CD4-positive, alpha-beta memory T cell (primary cell): ENCODE measurements at regions of chr10 and their contacts with region 1.

Region 1: DNA sequence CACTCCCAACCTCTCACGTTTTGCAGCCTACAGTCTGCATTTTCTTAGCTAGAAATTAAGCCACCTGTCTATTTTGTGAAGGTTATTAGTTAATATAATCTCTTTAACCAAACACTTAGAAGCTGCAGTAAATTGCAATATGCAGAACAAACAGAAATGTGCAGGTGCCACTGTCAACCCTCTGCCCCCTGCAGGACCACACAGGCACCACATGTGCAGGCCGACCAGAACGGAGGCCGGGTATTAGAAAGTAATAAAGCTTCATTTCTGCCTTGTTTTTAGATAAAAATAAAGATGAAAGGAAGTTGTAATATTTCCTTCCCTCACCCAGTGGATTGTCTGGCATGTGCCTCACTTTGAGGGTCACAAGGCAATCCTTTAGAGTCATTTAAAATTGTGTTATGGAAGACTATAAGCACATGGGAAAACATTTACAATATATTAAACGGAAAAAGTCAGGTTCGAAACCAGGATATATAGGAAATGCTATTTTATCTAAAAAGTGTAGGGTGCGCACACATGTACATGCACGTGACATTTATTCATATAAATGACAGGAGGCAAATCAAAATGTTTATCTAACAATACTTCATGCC is 158.2 kb downstream of the ARHGAP12 start:
- DNase-seq: peak; percentile 50 to 54 (median 51)
- H3K4me3 ChIP-seq: no peak overlapping the region
- H3K4me3 Mint-ChIP-seq: no peak overlapping the region
- H3K27ac ChIP-seq: no peak overlapping the region
- H3K27ac Mint-ChIP-seq: no peak overlapping the region
- H3K4me1 ChIP-seq: no peaks in the 10 kb centered on the region
- H3K4me1 Mint-ChIP-seq: no peaks in the 10 kb centered on the region
- H3K27me3 ChIP-seq: no peaks in the 10 kb centered on the region
- H3K27me3 Mint-ChIP-seq: no peaks in the 10 kb centered on the region

Region 2: GRCh38 chr10:30751678-30752331 is 1018.6 kb before region 1 on chr10:
- CTCF ChIA-PET with region 1: interaction called, 9 read pairs
- POLR2A ChIA-PET with region 1: no interaction called
- intact Hi-C with region 1: loop called (anchors 1 kb)
- DNase-seq: peak; percentile 49 to 72 (median 61)
- H3K4me3 ChIP-seq: no peak overlapping the region
- H3K4me3 Mint-ChIP-seq: peak overlapping the region in 6 of 8 donors; percentile 7 to 69 (median 22)
- H3K27ac ChIP-seq: no peak overlapping the region
- H3K27ac Mint-ChIP-seq: peak overlapping the region in 3 of 7 donors; percentile 62 to 82 (median 64)
- H3K4me1 ChIP-seq: peaks cover 4% of the 10 kb centered on the region
- H3K4me1 Mint-ChIP-seq: peaks cover 6 to 30% (median 22%) of the 10 kb centered on the region in 4 donors
- H3K27me3 ChIP-seq: no peaks in the 10 kb centered on the region
- H3K27me3 Mint-ChIP-seq: peaks cover 0 to 3% of the 10 kb centered on the region in 2 donors

Region 3: DNA sequence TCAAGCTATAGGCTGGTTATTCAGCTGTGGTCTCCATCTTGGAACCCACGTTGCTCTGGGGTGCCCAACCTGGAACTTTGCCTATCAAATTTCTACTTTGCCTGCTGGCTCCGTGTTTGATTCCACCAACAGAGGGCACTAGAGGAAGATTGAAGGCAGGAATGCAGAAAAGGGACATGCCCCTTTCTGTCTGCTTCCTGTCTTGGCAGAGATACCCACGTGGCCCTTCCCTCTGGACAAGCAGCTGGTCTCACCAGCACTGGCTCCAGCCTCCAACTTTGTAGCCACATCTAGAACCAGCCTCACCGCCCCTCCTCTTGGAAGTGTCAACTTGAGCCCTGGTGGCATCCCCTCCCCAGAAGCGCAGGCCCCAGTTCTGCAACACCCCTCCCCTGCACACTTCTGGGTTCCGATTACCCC is 686.6 kb before region 1 on chr10:
- CTCF ChIA-PET with region 1: interaction called, 12 read pairs
- POLR2A ChIA-PET with region 1: no interaction called
- intact Hi-C with region 1: no loop called
- DNase-seq: peak; percentile 40 to 59 (median 50)
- H3K4me3 ChIP-seq: no peak overlapping the region
- H3K4me3 Mint-ChIP-seq: no peak overlapping the region
- H3K27ac ChIP-seq: no peak overlapping the region
- H3K27ac Mint-ChIP-seq: no peak overlapping the region
- H3K4me1 ChIP-seq: no peaks in the 10 kb centered on the region
- H3K4me1 Mint-ChIP-seq: peaks cover 0 to 1% (median under 1%) of the 10 kb centered on the region in 4 donors
- H3K27me3 ChIP-seq: no peaks in the 10 kb centered on the region
- H3K27me3 Mint-ChIP-seq: no peaks in the 10 kb centered on the region

Region 4: DNA sequence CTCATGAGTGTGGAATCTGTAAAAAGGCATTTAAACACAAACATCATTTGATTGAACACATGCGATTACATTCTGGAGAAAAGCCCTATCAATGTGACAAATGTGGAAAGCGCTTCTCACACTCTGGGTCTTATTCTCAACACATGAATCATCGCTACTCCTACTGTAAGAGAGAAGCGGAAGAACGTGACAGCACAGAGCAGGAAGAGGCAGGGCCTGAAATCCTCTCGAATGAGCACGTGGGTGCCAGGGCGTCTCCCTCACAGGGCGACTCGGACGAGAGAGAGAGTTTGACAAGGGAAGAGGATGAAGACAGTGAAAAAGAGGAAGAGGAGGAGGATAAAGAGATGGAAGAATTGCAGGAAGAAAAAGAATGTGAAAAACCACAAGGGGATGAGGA is 243.7 kb before region 1 on chr10:
- CTCF ChIA-PET with region 1: no interaction called
- POLR2A ChIA-PET with region 1: no interaction called
- intact Hi-C with region 1: loop called (anchors 10 kb)
- DNase-seq: no peak
- H3K4me3 ChIP-seq: no peak overlapping the region
- H3K4me3 Mint-ChIP-seq: no peak overlapping the region
- H3K27ac ChIP-seq: no peak overlapping the region
- H3K27ac Mint-ChIP-seq: peak overlapping the region in 3 of 7 donors; percentile 13 to 67 (median 33)
- H3K4me1 ChIP-seq: no peaks in the 10 kb centered on the region
- H3K4me1 Mint-ChIP-seq: peaks cover 0 to 4% (median 0%) of the 10 kb centered on the region in 4 donors
- H3K27me3 ChIP-seq: no peaks in the 10 kb centered on the region
- H3K27me3 Mint-ChIP-seq: no peaks in the 10 kb centered on the region

Region 5: DNA sequence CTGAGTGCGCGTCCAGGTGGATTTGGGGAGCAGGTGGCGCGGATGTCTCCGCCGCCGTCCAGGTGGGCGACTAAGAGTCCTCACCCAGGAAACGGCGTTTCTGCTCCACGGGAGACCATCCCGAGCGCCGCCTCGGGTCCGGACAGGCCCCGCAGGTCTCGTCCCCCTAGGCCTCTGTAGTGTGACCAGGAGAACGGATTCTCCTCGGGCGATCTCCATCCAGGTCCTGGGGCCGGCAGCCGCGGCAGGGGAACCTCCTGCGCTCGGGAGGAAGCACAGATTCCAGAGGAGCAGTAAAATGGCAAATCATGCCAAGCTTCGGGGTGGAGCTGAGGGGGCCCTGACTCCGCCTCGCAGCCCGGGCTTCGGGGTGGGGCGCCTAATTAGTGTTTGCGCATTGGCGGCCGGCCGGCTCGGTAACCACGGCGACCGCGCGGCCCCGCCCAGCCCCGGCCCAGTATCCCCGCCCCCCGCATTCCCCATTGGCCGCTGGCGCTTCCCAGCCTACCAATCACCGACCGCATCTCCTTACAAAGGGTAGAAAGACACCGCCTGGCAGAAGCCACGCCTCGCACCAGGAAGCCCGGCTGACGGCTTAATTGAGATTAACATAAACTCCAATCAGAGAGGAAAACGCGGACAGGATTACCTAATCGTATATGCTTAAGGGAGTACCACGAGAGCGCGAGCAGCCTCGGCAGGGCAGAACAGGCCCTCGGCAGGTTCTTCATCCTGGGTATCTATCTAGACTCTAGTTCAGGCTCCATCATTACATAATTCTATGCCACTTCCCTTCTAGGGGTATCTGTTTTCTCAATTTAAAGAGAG is 10.4 kb before region 1 on chr10:
- CTCF ChIA-PET with region 1: interaction called, 18 read pairs
- POLR2A ChIA-PET with region 1: interaction called, 3 read pairs
- intact Hi-C with region 1: no loop called
- DNase-seq: peak; percentile 92 to 99 (median 97)
- H3K4me3 ChIP-seq: peak overlapping the region; percentile 66 to 90
- H3K4me3 Mint-ChIP-seq: peak overlapping the region; percentile 75 to 92 (median 86)
- H3K27ac ChIP-seq: peak overlapping the region; percentile 78
- H3K27ac Mint-ChIP-seq: peak overlapping the region; percentile 94 to 99 (median 99)
- H3K4me1 ChIP-seq: peaks cover 10% of the 10 kb centered on the region
- H3K4me1 Mint-ChIP-seq: peaks cover 9 to 17% (median 13%) of the 10 kb centered on the region in 4 donors
- H3K27me3 ChIP-seq: no peaks in the 10 kb centered on the region
- H3K27me3 Mint-ChIP-seq: no peaks in the 10 kb centered on the region

Region 6: DNA sequence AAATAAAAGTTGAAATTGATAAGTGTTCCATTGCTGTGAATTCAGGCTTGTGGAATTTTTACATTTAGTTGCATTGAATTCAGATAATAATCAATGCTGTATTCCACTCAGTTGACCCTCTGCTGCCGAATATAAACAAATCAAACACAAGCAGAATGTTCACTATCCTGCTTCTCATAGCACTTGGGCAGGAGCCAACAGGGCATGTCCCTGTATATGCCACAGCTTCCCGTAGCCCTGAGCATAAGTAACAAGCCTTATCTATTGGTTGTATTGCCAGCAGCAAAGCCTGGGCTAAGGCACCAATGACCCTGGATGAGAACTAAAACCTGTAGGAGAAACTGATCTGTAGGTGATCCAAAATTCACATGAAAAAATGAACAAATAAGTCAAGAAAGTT is 12.3 kb after region 1 on chr10:
- CTCF ChIA-PET with region 1: interaction called, 17 read pairs
- POLR2A ChIA-PET with region 1: interaction called, 3 read pairs
- intact Hi-C with region 1: no loop called
- DNase-seq: no peak
- H3K4me3 ChIP-seq: no peak overlapping the region
- H3K4me3 Mint-ChIP-seq: peak overlapping the region in 1 of 8 donors; percentile 39
- H3K27ac ChIP-seq: no peak overlapping the region
- H3K27ac Mint-ChIP-seq: no peak overlapping the region
- H3K4me1 ChIP-seq: no peaks in the 10 kb centered on the region
- H3K4me1 Mint-ChIP-seq: peaks cover 1 to 5% (median 4%) of the 10 kb centered on the region in 4 donors
- H3K27me3 ChIP-seq: no peaks in the 10 kb centered on the region
- H3K27me3 Mint-ChIP-seq: peaks cover 0 to 1% of the 10 kb centered on the region in 2 donors

Region 7: DNA sequence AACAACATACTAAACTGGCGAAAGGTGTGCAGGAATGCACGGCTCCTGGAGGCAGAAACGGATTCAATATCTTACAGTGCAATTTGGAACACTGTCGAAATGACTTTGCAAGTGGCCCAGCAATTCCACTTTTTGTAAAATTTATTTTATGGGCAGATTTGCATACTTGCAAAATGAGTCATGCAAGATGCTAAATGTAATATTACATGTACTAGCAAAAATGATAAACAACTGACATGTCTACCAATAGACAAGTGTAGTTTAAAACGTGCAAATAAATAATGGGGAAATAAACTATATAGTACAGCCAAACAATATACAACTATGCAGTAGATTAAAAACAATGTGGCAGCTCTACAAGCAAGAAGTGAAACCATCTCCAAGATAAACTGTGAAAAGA is 60.5 kb after region 1 on chr10:
- CTCF ChIA-PET with region 1: no interaction called
- POLR2A ChIA-PET with region 1: no interaction called
- intact Hi-C with region 1: no loop called
- DNase-seq: no peak
- H3K4me3 ChIP-seq: no peak overlapping the region
- H3K4me3 Mint-ChIP-seq: no peak overlapping the region
- H3K27ac ChIP-seq: no peak overlapping the region
- H3K27ac Mint-ChIP-seq: no peak overlapping the region
- H3K4me1 ChIP-seq: no peaks in the 10 kb centered on the region
- H3K4me1 Mint-ChIP-seq: peaks cover 4 to 9% (median 7%) of the 10 kb centered on the region in 4 donors
- H3K27me3 ChIP-seq: no peaks in the 10 kb centered on the region
- H3K27me3 Mint-ChIP-seq: no peaks in the 10 kb centered on the region

Region 8: GRCh38 chr10:31961277-31962074 is 191.1 kb after region 1 on chr10:
- CTCF ChIA-PET with region 1: no interaction called
- POLR2A ChIA-PET with region 1: no interaction called
- intact Hi-C with region 1: no loop called
- DNase-seq: no peak
- H3K4me3 ChIP-seq: no peak overlapping the region
- H3K4me3 Mint-ChIP-seq: peak overlapping the region in 2 of 8 donors; percentile 4 to 48
- H3K27ac ChIP-seq: no peak overlapping the region
- H3K27ac Mint-ChIP-seq: no peak overlapping the region
- H3K4me1 ChIP-seq: no peaks in the 10 kb centered on the region
- H3K4me1 Mint-ChIP-seq: peaks cover 4 to 17% (median 11%) of the 10 kb centered on the region in 4 donors
- H3K27me3 ChIP-seq: no peaks in the 10 kb centered on the region
- H3K27me3 Mint-ChIP-seq: no peaks in the 10 kb centered on the region